IMR-90 (cell line): ENCODE measurements at regions of chr3 and their contacts with region 1.

Region 1: DNA sequence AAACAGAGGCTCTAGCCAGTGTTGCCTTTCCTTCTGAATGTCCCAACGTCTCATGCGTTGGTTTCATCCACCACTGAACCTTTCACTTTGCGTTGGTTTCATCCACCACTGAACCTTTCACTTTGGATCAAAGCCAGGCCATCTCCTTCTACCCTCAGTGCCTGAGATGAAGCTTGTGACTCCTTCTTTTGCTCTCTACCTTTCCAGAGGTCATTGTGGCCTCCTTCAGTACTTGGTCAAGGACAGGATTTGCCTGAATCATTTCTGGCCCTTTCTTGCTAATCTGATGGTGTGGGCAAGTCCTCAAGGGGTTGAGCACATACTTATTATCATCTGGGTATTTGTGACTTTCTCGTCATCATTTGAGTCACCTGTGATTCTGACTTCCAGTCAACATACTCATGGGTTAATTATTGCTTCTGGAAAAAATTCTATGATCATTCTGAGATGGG is 50.0 kb downstream of the SELENOT start:
- DNase-seq: no peak
- ATAC-seq: no peak
- H3K4me3 ChIP-seq: no peak overlapping the region
- H3K27ac ChIP-seq: no peak overlapping the region
- H3K4me1 ChIP-seq: no peaks in the 10 kb centered on the region
- H3K27me3 ChIP-seq: peaks cover 2% of the 10 kb centered on the region
- CTCF ChIP-seq: no peak
- POLR2A ChIP-seq: no peak
- RAD21 ChIP-seq: no peak

Region 2: GRCh38 chr3:150603153-150603979 is 49.8 kb before region 1 on chr3 and contains the start of gene SELENOT:
- CTCF ChIA-PET with region 1: no interaction called
- POLR2A ChIA-PET with region 1: no interaction called
- dilution Hi-C with region 1: no loop called
- in situ Hi-C with region 1: no loop called
- intact Hi-C with region 1: no loop called
- DNase-seq: peak; percentile 96
- ATAC-seq: peak; percentile 87
- H3K4me3 ChIP-seq: peak within 1 kb of the TSS; percentile 56
- H3K27ac ChIP-seq: peak within 1 kb of the TSS; percentile 87
- H3K4me1 ChIP-seq: no peaks in the 10 kb centered on the region; the same call in 1 of the 2 replicates
- H3K27me3 ChIP-seq: no peaks in the 10 kb centered on the region
- CTCF ChIP-seq: peak; percentile 33; the same call in 1 of the 2 replicates
- POLR2A ChIP-seq: peak; percentile 97
- RAD21 ChIP-seq: 0 out of 2 replicates have a peak, but pooled peaks have one; percentile 24
- total RNA-seq, gene SELENOT: 399 and 415 TPM in 2 replicates

Region 3: DNA sequence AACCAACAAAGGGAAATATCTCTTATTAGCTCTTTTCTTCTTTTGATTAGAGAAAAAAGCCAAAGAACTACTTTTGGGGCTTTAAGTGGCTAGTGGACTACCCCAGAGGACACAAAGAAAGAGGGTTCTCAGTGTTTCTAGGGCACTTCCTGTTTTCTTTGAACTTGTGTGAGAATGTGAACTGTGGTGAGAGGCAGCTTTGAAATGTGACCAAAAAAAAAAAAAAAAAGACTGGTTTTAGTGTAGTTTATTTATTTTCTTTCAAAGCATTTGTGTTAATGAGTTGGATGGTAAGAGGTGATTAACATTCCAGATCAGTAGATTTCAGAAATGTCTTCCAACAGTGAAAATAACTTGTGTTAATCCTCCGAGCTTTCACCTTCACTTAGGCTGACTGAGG is 17.6 kb before region 1 on chr3:
- CTCF ChIA-PET with region 1: interaction called, 4 read pairs
- POLR2A ChIA-PET with region 1: no interaction called
- dilution Hi-C with region 1: no loop called
- in situ Hi-C with region 1: no loop called
- intact Hi-C with region 1: loop called (anchors 1 kb)
- DNase-seq: no peak
- ATAC-seq: peak; percentile 42; the same call in 1 of the 2 replicates
- H3K4me3 ChIP-seq: no peak overlapping the region
- H3K27ac ChIP-seq: no peak overlapping the region
- H3K4me1 ChIP-seq: peaks cover 2% of the 10 kb centered on the region; the same call in 1 of the 2 replicates
- H3K27me3 ChIP-seq: no peaks in the 10 kb centered on the region
- CTCF ChIP-seq: no peak
- POLR2A ChIP-seq: no peak
- RAD21 ChIP-seq: no peak

Region 4: DNA sequence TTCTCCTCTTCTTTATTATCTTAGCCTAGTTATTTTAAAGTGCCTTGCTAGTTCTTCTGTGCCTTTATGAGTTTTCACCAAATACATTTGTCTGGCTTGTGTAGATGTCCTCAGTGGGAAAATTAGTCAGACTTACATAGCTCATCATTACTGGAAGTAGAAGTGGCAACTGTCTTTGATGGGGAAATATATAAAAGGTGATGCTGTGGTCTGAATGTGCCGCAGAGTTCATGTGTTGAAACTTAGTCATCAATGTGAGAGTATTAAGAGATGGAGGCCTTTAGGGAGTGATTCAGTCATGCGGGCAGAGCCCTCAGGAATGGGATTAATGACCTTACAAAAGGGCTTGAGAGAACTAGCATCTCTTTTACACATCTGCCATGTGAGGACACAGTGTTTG is 57.0 kb after region 1 on chr3:
- CTCF ChIA-PET with region 1: no interaction called
- POLR2A ChIA-PET with region 1: no interaction called
- dilution Hi-C with region 1: no loop called
- in situ Hi-C with region 1: no loop called
- intact Hi-C with region 1: no loop called
- DNase-seq: peak; percentile 43
- ATAC-seq: no peak
- H3K4me3 ChIP-seq: no peak overlapping the region
- H3K27ac ChIP-seq: no peak overlapping the region
- H3K4me1 ChIP-seq: no peaks in the 10 kb centered on the region
- H3K27me3 ChIP-seq: no peaks in the 10 kb centered on the region
- CTCF ChIP-seq: no peak
- POLR2A ChIP-seq: no peak
- RAD21 ChIP-seq: no peak

Region 5: GRCh38 chr3:151210676-151211381 is 557.7 kb after region 1 on chr3:
- CTCF ChIA-PET with region 1: no interaction called
- POLR2A ChIA-PET with region 1: no interaction called
- dilution Hi-C with region 1: no loop called
- in situ Hi-C with region 1: no loop called
- intact Hi-C with region 1: no loop called
- DNase-seq: no peak
- ATAC-seq: no peak
- H3K4me3 ChIP-seq: no peak overlapping the region
- H3K27ac ChIP-seq: no peak overlapping the region
- H3K4me1 ChIP-seq: peaks cover 2% of the 10 kb centered on the region; the same call in 1 of the 2 replicates
- H3K27me3 ChIP-seq: no peaks in the 10 kb centered on the region
- CTCF ChIP-seq: no peak
- POLR2A ChIP-seq: no peak
- RAD21 ChIP-seq: no peak